ENCODE measurements at regions of chr11 and their contacts with region 1.

Region 1: DNA sequence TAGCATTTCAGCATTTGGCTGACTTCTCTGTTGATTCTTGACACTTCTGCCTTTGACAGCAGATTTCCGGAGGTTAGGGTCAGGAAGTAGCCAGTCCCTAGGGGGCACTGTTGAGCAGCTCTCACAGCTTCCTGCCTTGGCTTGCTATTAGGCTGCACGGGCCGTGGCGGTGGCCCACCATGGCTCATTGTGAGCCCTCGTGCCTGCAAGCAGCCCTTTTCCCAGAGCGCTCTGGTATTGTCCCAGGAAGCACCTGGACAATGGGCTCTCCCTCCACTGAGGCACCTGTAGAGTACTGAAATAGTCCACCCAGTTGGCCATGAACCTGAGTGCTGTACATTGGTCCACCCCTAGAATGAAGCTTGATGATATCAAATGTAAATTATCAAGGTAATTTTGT is 100.2 kb upstream of the GAL start:
- DNase-seq: peak in 1 of 2 donors; percentile 36
- ATAC-seq: no peak
- H3K4me3 ChIP-seq: no peak overlapping the region
- H3K27ac ChIP-seq: peak overlapping the region; percentile 31 to 89 (median 82)
- H3K4me1 ChIP-seq: peaks cover 48 to 54% of the 10 kb centered on the region in 2 donors
- H3K27me3 ChIP-seq: no peaks in the 10 kb centered on the region
- CTCF ChIP-seq: peak in 4 of 5 experiments; percentile 48 to 62 (median 56)
- POLR2A ChIP-seq: no peak

Region 2: DNA sequence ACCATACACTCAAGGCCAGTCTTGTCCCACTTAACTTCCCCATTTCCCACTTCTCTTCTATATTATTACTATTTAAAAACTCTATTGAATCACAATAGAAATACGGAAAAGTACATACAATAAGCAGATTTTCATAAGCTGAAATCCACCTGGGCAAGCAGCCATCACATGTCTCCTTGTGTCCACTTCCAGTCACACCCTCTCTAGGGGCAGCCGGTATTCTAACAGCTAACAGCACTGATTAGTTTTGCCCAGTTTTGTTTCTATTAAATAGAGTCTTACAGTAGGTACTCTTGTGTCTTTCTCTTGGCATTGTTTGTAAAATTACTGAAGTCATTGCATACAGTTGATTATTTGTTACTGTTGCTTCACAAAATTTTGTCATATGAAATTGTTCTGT is 85.8 kb before region 1 on chr11:
- in situ Hi-C with region 1: no loop called
- intact Hi-C with region 1: loop called (anchors 5 kb)
- DNase-seq: peak; percentile 43 to 50
- ATAC-seq: peak; percentile 60 to 61
- H3K4me3 ChIP-seq: peak overlapping the region; percentile 19 to 44 (median 29)
- H3K27ac ChIP-seq: peak overlapping the region; percentile 77 to 91 (median 86)
- H3K4me1 ChIP-seq: peaks cover 82 to 85% of the 10 kb centered on the region in 2 donors
- H3K27me3 ChIP-seq: no peaks in the 10 kb centered on the region
- CTCF ChIP-seq: peak in 1 of 5 experiments; percentile 7
- POLR2A ChIP-seq: no peak

Region 3: GRCh38 chr11:68542617-68543016 is 41.5 kb before region 1 on chr11:
- in situ Hi-C with region 1: no loop called
- intact Hi-C with region 1: loop called (anchors 5 kb)
- DNase-seq: no peak
- ATAC-seq: no peak
- H3K4me3 ChIP-seq: no peak overlapping the region
- H3K27ac ChIP-seq: peak overlapping the region; percentile 84 to 86 (median 85)
- H3K4me1 ChIP-seq: peaks cover 74 to 85% of the 10 kb centered on the region in 2 donors
- H3K27me3 ChIP-seq: no peaks in the 10 kb centered on the region
- CTCF ChIP-seq: no peak
- POLR2A ChIP-seq: no peak

Region 4: DNA sequence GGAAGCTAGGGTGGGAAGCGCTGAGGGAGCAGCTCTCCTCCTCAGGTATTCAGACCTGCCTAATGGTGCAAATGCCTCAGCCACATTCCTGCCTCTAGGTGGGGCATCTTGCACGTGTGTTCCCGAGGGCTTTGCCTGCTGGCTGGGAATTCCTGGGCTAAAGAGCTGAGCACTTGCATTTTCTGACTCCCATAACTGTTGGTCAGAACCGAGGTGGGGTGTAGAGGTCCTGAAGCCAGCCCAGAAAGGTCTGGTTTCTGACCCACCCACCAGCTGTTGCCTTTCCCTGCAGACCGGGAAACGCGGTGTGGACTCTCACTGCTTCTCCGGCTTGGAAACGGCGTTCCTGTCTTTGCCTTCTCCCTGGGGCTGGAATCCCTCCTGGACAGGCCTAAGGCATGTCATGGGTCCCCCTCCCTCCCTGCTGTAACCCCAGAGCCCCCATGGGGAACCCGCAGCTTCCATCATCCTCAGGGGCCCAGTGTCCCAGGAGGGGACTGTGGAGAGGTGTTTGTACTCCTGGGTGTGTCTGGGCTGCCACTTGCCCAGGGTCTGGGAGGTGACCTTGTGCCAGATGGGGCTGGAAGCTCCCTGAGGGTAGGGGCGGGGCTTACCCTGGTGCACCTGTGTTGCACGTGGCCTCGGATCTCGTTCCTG is 547.7 kb after region 1 on chr11:
- in situ Hi-C with region 1: no loop called
- intact Hi-C with region 1: no loop called
- DNase-seq: no peak
- ATAC-seq: peak; percentile 65 to 68
- H3K4me3 ChIP-seq: no peak overlapping the region
- H3K27ac ChIP-seq: no peak overlapping the region
- H3K4me1 ChIP-seq: no peaks in the 10 kb centered on the region
- H3K27me3 ChIP-seq: peaks cover 0 to 3% (median 0%) of the 10 kb centered on the region in 3 donors
- CTCF ChIP-seq: peak; percentile 60 to 75 (median 70)
- POLR2A ChIP-seq: no peak